ENCODE measurements at regions of chr17 and their contacts with region 1.

Region 1: GRCh38 chr17:79970576-79971068 is 65.0 kb downstream of the TBC1D16 start:
- DNase-seq: no peak
- H3K4me3 Mint-ChIP-seq: no peak overlapping the region
- H3K27ac Mint-ChIP-seq: no peak overlapping the region
- H3K4me1 Mint-ChIP-seq: no peaks in the 10 kb centered on the region
- H3K27me3 Mint-ChIP-seq: peaks cover 19% of the 10 kb centered on the region

Region 2: DNA sequence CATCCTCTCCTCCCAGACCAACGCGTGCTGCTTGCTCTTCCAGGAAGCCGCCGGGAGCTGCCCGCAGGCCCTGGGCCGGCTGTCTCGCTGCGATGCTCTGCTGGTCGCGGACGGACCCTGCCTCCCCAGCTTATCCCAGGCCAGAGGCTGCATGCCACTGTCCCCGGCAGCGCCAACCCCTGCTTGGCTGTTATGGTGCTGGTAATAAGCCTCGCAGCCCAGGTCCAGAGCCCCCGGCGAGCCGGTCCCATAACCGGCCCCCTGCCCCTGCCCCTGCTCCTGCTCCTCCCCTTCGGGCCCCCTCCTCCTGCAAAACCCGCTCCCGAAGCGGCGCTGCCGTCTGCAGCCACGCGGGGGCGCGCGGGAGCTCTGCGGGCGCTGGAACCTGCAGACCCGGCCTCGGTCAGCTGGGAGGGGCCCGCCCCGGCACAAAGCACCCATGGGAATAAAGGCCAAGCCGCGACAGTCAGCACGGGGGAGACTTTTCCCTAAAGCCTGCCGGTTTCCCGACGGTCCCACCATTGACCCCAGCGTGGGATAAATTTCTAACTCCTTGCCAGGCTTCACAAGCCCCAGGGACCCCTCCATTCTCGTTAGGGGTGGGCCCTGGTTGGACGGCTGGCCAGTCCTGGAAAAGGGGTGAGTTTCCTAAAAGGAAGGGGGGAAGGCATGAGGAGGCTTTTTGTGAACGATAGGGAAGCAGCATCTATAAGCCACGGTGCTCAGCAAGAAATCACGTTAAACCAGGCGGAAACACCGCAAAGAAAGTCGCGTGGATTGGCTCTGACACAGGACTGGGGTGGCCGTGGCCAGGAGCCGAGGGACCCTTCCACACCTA is 228.7 kb before region 1 on chr17:
- intact Hi-C with region 1: loop called (anchors 1 kb)
- DNase-seq: peak; percentile 71
- H3K4me3 Mint-ChIP-seq: no peak overlapping the region
- H3K27ac Mint-ChIP-seq: no peak overlapping the region
- H3K4me1 Mint-ChIP-seq: peaks cover 11% of the 10 kb centered on the region
- H3K27me3 Mint-ChIP-seq: peaks cover 27% of the 10 kb centered on the region

Region 3: GRCh38 chr17:80132906-80133625 is 162.4 kb after region 1 on chr17:
- intact Hi-C with region 1: no loop called
- DNase-seq: no peak
- H3K4me3 Mint-ChIP-seq: no peak overlapping the region
- H3K27ac Mint-ChIP-seq: no peak overlapping the region
- H3K4me1 Mint-ChIP-seq: no peaks in the 10 kb centered on the region
- H3K27me3 Mint-ChIP-seq: no peaks in the 10 kb centered on the region